Activated CD8-positive, alpha-beta T cell treated with anti-CD3 and anti-CD28 coated beads for 36 hours (primary cell): ENCODE measurements at regions of chr19 and their contacts with region 1.

Region 1: GRCh38 chr19:3275583-3276340 is 51.3 kb downstream of the CELF5 start:
- DNase-seq: peak; percentile 96
- ATAC-seq: peak; percentile 87
- H3K4me3 Mint-ChIP-seq: peak overlapping the region; percentile 71
- H3K27ac Mint-ChIP-seq: peak overlapping the region; percentile 85
- H3K4me1 Mint-ChIP-seq: peaks cover 16% of the 10 kb centered on the region
- H3K27me3 Mint-ChIP-seq: peaks cover 9% of the 10 kb centered on the region
- CTCF ChIP-seq: peak; percentile 67

Region 2: GRCh38 chr19:3003046-3003445 is 272.7 kb before region 1 on chr19:
- CTCF ChIA-PET with region 1: no interaction called
- POLR2A ChIA-PET with region 1: no interaction called
- intact Hi-C with region 1: no loop called
- DNase-seq: no peak
- ATAC-seq: no peak
- H3K4me3 Mint-ChIP-seq: no peak overlapping the region
- H3K27ac Mint-ChIP-seq: no peak overlapping the region
- H3K4me1 Mint-ChIP-seq: no peaks in the 10 kb centered on the region
- H3K27me3 Mint-ChIP-seq: no peaks in the 10 kb centered on the region
- CTCF ChIP-seq: no peak

Region 3: GRCh38 chr19:3265432-3265831 is 10.3 kb before region 1 on chr19:
- CTCF ChIA-PET with region 1: interaction called, 12 read pairs
- POLR2A ChIA-PET with region 1: interaction called, 3 read pairs
- intact Hi-C with region 1: no loop called
- DNase-seq: no peak
- ATAC-seq: no peak
- H3K4me3 Mint-ChIP-seq: no peak overlapping the region
- H3K27ac Mint-ChIP-seq: no peak overlapping the region
- H3K4me1 Mint-ChIP-seq: no peaks in the 10 kb centered on the region
- H3K27me3 Mint-ChIP-seq: peaks cover 15% of the 10 kb centered on the region
- CTCF ChIP-seq: no peak